ENCODE measurements at regions of chr17 and their contacts with region 1.

Region 1: DNA sequence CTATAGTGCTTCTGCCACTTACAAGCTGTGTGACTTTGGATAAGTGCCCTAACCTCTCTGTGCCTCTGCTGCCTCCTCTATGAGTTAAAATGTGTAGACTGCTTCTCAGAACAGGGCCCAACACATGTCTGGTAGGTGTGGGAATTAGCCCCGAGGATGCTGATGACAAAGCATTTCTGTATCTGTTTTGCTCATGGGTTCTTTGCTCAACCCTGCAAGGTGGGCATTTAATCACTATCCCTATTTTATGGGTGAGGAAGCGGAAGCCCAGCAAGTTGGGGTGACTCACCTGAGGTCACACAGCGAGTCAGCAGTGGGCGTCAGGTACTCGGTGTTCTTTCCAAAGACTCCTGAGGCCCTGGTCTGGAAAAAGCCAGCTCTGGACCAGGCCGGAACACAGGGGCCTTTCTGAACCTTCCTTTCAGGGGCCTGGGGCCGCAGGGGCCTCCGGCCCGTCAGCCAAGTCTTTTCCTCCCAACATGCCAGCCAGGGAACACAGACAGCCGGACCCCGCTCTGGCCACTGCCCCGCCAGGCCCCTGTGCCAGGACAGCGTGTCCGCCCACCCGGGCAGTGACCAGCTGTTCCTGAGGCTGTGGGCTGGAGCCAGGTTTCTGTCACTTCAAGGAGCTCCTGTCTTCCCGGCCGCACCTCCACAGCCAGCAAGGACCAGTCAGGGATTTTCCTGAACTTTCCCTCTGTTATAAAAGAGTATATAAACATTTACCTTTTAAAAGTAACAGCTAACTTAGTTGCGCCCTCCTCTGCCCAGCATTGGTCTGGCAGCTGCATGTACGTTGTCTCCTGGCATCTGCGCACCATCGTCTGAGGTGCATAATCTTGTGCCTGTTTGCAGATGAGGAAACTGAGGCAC is 62.5 kb downstream of the SREBF1 start:
- DNase-seq: peak; percentile 90
- H3K4me3 ChIP-seq: peak overlapping the region in 1 of 4 donors; percentile 20
- H3K27ac ChIP-seq: peak overlapping the region; percentile 86 to 93 (median 89)
- H3K4me1 ChIP-seq: peaks cover 0 to 84% (median 67%) of the 10 kb centered on the region in 4 donors
- H3K27me3 ChIP-seq: no peaks in the 10 kb centered on the region
- CTCF ChIP-seq: peak; percentile 29 to 60 (median 54)
- EP300 ChIP-seq: peak in 2 of 4 donors; percentile 63 to 81
- POLR2A ChIP-seq: no peak

Region 2: DNA sequence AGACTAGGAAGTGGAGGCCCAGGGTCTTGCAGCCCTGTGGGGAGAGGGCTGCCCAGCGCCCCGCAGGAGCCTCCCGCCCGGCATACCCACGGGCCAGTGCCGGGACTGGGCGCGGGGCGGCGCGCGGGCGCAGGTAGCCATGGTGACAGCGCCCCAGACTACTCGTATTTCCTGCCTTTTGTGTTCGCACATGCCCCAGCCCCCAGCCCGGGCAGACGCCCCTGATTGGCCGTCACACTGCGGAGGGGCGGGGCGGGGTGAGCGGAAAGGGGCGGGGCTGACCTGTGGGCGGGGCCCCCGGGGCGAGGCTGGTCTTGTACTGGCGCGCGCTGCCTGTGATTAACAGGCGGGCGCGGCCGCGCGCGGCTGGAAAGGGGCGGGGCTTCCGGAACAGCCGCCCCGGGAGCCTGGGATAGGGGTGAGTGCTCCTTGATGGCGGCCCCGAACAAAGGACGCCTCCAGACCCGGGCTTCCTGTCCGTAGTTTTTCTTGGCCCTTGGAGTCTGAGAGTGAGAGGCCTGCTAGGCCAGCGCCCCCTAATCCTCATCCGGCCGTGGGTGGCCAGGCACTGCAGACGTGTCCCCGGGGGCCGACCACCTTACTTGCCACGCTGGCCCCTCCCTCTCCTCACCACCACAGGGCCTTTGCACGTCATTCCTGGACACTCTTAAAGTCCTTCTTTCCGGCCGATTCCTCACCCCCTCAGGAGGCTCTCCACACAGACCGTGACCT is 22.0 kb before region 1 on chr17:
- intact Hi-C with region 1: loop called (anchors 2 kb)
- DNase-seq: peak; percentile 98
- H3K4me3 ChIP-seq: peak overlapping the region; percentile 37 to 51 (median 48)
- H3K27ac ChIP-seq: peak overlapping the region; percentile 79 to 89 (median 88)
- H3K4me1 ChIP-seq: peaks cover 0 to 61% (median 50%) of the 10 kb centered on the region in 4 donors
- H3K27me3 ChIP-seq: no peaks in the 10 kb centered on the region
- CTCF ChIP-seq: peak in 1 of 4 experiments; percentile 15
- EP300 ChIP-seq: no peak
- POLR2A ChIP-seq: no peak

Region 3: GRCh38 chr17:17809527-17810373 is 35.5 kb after region 1 on chr17:
- intact Hi-C with region 1: no loop called
- DNase-seq: peak; percentile 86
- H3K4me3 ChIP-seq: peak overlapping the region; percentile 4 to 48 (median 36)
- H3K27ac ChIP-seq: peak overlapping the region; percentile 70 to 90 (median 83)
- H3K4me1 ChIP-seq: peaks cover 0 to 55% (median 46%) of the 10 kb centered on the region in 4 donors
- H3K27me3 ChIP-seq: no peaks in the 10 kb centered on the region
- CTCF ChIP-seq: no peak
- EP300 ChIP-seq: no peak
- POLR2A ChIP-seq: no peak

Measured in sigmoid colon (tissue), 7 donors.